CD8-positive, alpha-beta T cell (primary cell): ENCODE measurements at regions of chr16 and their contacts with region 1.

Region 1: DNA sequence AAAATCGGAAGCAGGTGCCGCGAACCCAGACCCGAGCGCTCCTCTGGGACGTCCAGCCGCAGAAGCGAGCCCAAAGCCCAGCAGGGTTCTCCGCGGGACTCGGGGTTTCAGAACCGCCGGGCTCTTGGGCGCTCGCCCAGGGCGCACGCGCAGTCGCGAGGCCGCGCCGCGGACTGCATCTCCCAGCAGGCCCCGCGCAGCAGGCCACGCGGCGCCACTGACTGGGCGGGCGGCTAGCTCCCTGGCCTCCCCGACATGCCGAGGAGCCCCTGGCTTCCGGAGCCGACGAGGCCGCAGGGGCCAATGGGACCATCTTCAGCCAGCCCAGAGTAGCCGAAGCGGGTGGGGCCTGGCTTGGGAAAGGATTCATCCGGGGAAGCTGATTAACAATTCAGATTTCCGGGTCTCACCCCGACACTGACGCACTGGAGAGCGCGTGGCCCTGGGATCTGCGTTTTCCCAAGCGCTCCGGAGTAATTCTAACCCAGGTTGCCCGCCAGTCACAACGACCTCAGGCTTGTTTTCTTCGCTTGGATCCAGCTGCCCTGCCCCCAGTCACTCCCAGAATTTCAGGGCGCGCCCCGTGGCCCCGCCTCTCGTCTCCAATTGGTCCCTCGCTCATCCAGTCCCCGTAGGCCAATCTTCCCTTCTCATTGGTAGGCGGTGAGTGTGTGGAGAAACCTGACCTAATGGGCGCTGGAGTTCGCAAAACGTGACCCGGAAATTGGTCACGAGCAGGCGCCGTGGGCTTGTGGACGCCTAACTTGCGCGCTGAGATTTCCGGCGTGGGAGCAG is at the start of gene ZNF263:
- DNase-seq: peak; percentile 82 to 98 (median 92)
- ATAC-seq: peak; percentile 88
- H3K4me3 ChIP-seq: peak within 1 kb of the TSS; percentile 84 to 92
- H3K4me3 Mint-ChIP-seq: peak within 1 kb of the TSS; percentile 89
- H3K27ac ChIP-seq: peak within 1 kb of the TSS; percentile 96 to 100
- H3K27ac Mint-ChIP-seq: peak within 1 kb of the TSS; percentile 96
- H3K4me1 ChIP-seq: peaks cover 28% of the 10 kb centered on the region
- H3K4me1 Mint-ChIP-seq: peaks cover 56% of the 10 kb centered on the region
- H3K27me3 ChIP-seq: no peaks in the 10 kb centered on the region
- H3K27me3 Mint-ChIP-seq: no peaks in the 10 kb centered on the region
- CTCF ChIP-seq: no peak
- total RNA-seq, gene ZNF263: 44.2 to 49.0 TPM

Region 2: DNA sequence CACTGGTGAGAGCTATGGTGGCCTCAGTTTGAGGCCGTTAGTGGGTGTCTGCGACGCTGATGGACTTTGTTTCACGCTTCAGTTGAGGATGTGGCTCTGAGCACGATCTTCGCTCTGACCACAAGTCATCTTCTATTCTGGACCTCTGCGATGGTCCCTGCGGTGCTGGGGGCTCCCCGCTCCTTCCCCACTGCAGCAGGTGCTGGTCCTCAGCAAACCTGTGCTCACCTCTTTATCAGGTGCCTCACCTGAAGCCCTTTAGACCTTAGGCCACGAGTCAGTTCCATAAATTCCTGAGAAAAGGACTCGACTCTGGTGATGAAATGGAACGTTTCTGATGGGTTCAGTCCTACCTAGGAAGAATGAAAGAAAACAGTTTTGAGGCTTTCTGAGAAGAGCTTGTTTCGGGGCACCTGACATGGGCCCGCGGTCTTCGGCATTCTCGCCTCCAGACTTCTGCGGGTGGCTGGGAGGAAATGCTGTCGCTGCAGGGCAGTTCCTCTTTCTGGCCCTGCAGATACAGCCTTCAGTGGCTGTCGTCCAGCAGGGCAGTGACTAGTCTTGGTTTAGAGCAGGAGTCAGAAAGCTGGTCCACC is 595.9 kb before region 1 on chr16:
- CTCF ChIA-PET with region 1: no interaction called
- POLR2A ChIA-PET with region 1: no interaction called
- intact Hi-C with region 1: no loop called
- DNase-seq: peak in 6 of 9 experiments; percentile 20 to 54 (median 38)
- ATAC-seq: no peak
- H3K4me3 ChIP-seq: peak overlapping the region in 1 of 2 experiments; percentile 10
- H3K4me3 Mint-ChIP-seq: peak overlapping the region; percentile 60
- H3K27ac ChIP-seq: peak overlapping the region; percentile 9 to 69
- H3K27ac Mint-ChIP-seq: peak overlapping the region; percentile 67
- H3K4me1 ChIP-seq: peaks cover 13% of the 10 kb centered on the region
- H3K4me1 Mint-ChIP-seq: peaks cover 30% of the 10 kb centered on the region
- H3K27me3 ChIP-seq: no peaks in the 10 kb centered on the region
- H3K27me3 Mint-ChIP-seq: no peaks in the 10 kb centered on the region
- CTCF ChIP-seq: no peak

Region 3: GRCh38 chr16:3023669-3024478 is 259.1 kb before region 1 on chr16 and contains the starts of genes HCFC1R1 and THOC6:
- CTCF ChIA-PET with region 1: no interaction called
- POLR2A ChIA-PET with region 1: no interaction called
- intact Hi-C with region 1: loop called in 1 of 2 experiments (anchors 2 kb)
- DNase-seq: peak; percentile 88 to 98 (median 96)
- ATAC-seq: peak; percentile 73
- H3K4me3 ChIP-seq: peak within 1 kb of the TSS; percentile 88 to 90
- H3K4me3 Mint-ChIP-seq: peak within 1 kb of the TSS; percentile 95
- H3K27ac ChIP-seq: peak within 1 kb of the TSS; percentile 70 to 96
- H3K27ac Mint-ChIP-seq: peak within 1 kb of the TSS; percentile 95
- H3K4me1 ChIP-seq: peaks cover 65% of the 10 kb centered on the region
- H3K4me1 Mint-ChIP-seq: peaks cover 49% of the 10 kb centered on the region
- H3K27me3 ChIP-seq: peaks cover 0 to 3% of the 10 kb centered on the region in 2 experiments
- H3K27me3 Mint-ChIP-seq: peaks cover 3% of the 10 kb centered on the region
- CTCF ChIP-seq: no peak
- total RNA-seq, gene HCFC1R1: 6.4 to 7.1 TPM
- total RNA-seq, gene THOC6: 13.1 to 14.0 TPM

Region 4: DNA sequence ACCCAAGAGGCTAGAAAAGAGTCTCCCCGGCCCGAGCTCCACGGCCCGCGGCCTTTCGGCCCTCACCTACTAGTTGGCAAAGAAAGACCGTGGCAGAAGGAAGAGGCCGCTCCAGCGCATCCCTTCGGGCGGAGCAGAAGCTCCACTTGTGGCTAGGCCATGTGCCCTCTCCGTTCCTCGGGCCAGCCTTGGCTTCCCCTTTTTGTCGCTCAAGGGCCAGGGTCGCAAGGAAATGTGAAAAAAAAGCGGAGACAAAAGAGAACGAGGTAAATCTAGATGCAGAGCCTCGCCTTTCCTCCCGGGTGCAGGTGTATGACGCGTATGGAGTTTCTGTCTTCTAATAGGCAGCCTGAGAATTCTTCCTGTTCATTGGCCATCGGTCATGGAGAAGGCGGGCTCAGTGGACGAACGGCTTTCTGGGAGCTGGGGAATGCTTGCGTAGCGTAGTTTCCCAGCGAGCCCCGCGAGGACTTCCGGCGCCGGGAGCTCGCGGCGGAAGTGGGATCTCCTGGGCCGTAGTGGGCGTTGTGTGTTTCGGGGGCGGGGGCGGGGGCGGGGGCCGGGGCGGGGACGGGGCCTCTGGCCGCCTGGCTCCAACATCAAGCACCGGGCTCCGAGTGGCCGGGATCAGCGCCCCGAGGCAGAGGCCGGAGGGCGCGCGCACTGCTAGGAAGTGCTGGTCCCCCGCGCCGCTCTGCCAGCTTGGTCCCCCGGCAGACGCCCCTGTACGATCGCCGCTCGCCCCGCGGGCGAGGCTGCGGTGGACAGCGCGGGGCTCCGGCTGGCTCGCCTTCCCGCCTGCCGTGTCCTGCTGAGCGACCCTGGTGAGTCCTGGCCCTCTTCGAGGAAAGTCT is 148.1 kb before region 1 on chr16 and contains the start of gene ZNF213:
- CTCF ChIA-PET with region 1: interaction called, 4 read pairs
- POLR2A ChIA-PET with region 1: interaction called, 6 read pairs
- intact Hi-C with region 1: loop called in 1 of 2 experiments (anchors 2 kb)
- DNase-seq: peak; percentile 84 to 99 (median 92)
- ATAC-seq: peak; percentile 99
- H3K4me3 ChIP-seq: peak within 1 kb of the TSS; percentile 89 to 93
- H3K4me3 Mint-ChIP-seq: peak within 1 kb of the TSS; percentile 95
- H3K27ac ChIP-seq: peak within 1 kb of the TSS; percentile 94 to 95
- H3K27ac Mint-ChIP-seq: peak within 1 kb of the TSS; percentile 99
- H3K4me1 ChIP-seq: peaks cover 15% of the 10 kb centered on the region
- H3K4me1 Mint-ChIP-seq: peaks cover 29% of the 10 kb centered on the region
- H3K27me3 ChIP-seq: no peaks in the 10 kb centered on the region
- H3K27me3 Mint-ChIP-seq: no peaks in the 10 kb centered on the region
- CTCF ChIP-seq: peak; percentile 5
- total RNA-seq, gene ZNF213: 1.8 to 2.2 TPM

Region 5: GRCh38 chr16:3198334-3199072 is 84.4 kb before region 1 on chr16:
- CTCF ChIA-PET with region 1: no interaction called
- POLR2A ChIA-PET with region 1: no interaction called
- intact Hi-C with region 1: no loop called
- DNase-seq: no peak
- ATAC-seq: no peak
- H3K4me3 ChIP-seq: no peak overlapping the region
- H3K4me3 Mint-ChIP-seq: no peak overlapping the region
- H3K27ac ChIP-seq: no peak overlapping the region
- H3K27ac Mint-ChIP-seq: no peak overlapping the region
- H3K4me1 ChIP-seq: no peaks in the 10 kb centered on the region
- H3K4me1 Mint-ChIP-seq: peaks cover 4% of the 10 kb centered on the region
- H3K27me3 ChIP-seq: peaks cover 17 to 23% of the 10 kb centered on the region in 2 experiments
- H3K27me3 Mint-ChIP-seq: peaks cover 24% of the 10 kb centered on the region
- CTCF ChIP-seq: no peak

Region 6: DNA sequence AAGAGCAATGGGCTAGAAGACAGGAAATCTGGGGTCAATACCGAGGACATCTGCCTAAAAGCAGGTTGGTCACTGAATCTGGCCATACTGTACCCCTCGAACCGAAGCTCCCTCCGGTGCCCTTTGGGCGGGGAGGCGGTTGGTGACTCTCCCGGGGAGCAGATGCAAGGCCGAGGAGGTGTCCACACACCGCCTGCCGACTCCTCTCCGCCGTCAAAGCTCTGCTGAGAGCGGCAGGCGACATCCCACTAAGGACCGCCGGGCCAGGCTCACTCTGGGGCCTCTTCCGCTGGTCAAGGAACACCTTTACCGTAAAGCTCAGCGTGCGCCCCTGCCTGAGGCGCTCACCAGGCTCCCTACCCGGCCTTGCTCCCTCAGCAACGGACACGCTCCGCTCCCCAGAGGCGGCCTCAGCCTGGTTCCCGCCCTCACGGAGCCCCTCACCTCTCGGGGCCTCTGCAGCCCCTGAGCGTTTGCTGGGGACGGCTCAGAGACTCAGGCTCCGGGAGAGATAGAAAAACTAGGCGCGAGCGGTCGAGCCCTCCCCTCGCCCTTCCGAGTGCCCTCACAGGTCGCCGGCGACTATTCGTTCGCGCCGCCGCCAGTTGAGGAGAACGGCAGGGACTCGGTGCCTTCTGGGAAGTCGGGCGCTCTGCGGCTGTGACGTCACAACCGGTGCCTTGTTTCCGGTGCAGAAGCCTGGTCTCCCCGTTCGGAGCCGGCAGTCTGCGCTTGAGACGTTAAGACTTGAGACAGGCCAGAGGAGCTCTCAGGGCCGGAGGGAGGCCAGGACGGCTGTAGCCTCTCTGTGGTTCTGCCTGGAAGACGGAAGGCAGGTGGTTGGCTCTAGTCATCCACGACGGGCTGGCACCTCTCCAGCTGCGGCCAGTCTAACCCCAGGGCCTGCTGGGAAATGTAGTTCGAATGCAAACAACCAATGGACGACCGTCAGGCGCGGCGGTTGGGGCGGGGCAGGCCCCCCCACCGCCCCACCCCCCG is 48.1 kb before region 1 on chr16 and contains the start of gene ZNF200:
- CTCF ChIA-PET with region 1: no interaction called
- POLR2A ChIA-PET with region 1: interaction called, 13 read pairs
- intact Hi-C with region 1: loop called (anchors 1 kb)
- DNase-seq: peak; percentile 85 to 97 (median 95)
- ATAC-seq: peak; percentile 85
- H3K4me3 ChIP-seq: peak within 1 kb of the TSS; percentile 82 to 99
- H3K4me3 Mint-ChIP-seq: peak within 1 kb of the TSS; percentile 96
- H3K27ac ChIP-seq: peak within 1 kb of the TSS; percentile 94 to 96
- H3K27ac Mint-ChIP-seq: peak within 1 kb of the TSS; percentile 98
- H3K4me1 ChIP-seq: peaks cover 21% of the 10 kb centered on the region
- H3K4me1 Mint-ChIP-seq: peaks cover 40% of the 10 kb centered on the region
- H3K27me3 ChIP-seq: no peaks in the 10 kb centered on the region
- H3K27me3 Mint-ChIP-seq: no peaks in the 10 kb centered on the region
- CTCF ChIP-seq: no peak
- total RNA-seq, gene ZNF200: 12.5 to 14.1 TPM

Region 7: DNA sequence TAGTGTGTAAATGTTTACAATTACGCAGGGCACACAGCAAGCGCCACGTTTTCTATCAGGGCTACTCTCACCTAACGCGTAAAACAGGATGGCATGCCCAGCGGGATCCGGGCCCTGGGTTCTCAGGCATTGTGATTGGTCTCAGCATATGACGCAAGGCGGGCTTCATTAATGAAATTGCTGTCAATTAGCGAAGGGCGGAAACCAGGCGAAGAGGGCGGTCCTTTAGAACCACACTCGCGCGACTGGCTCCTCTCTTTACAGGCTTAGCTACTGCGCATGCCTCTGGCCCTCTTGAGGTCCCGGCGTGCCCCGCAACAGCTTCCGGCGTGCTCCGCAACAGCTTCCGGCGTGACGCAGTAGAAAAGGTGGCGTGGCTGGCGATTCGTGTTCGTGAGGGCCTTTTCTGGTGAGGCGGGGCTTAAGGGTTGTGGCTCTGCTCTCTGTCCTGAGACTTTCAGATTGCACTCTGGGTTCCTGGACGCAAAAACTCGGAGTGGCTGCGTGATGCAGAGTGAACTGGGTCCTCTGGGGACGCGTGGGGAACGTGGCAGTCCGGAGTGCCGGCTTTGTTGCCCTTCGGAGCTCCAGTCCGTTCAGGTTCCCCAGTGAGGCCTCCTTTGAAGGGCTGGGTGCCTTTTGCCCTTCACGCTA is 82.0 kb after region 1 on chr16:
- CTCF ChIA-PET with region 1: no interaction called
- POLR2A ChIA-PET with region 1: interaction called, 4 read pairs
- intact Hi-C with region 1: loop called (anchors 2 to 5 kb)
- DNase-seq: peak; percentile 67 to 95 (median 82)
- ATAC-seq: peak; percentile 91
- H3K4me3 ChIP-seq: peak overlapping the region; percentile 46 to 62
- H3K4me3 Mint-ChIP-seq: peak overlapping the region; percentile 81
- H3K27ac ChIP-seq: peak overlapping the region; percentile 72 to 91
- H3K27ac Mint-ChIP-seq: peak overlapping the region; percentile 91
- H3K4me1 ChIP-seq: peaks cover 9% of the 10 kb centered on the region
- H3K4me1 Mint-ChIP-seq: peaks cover 11% of the 10 kb centered on the region
- H3K27me3 ChIP-seq: peaks cover 0 to 10% of the 10 kb centered on the region in 2 experiments
- H3K27me3 Mint-ChIP-seq: peaks cover 24% of the 10 kb centered on the region
- CTCF ChIP-seq: no peak

Region 8: DNA sequence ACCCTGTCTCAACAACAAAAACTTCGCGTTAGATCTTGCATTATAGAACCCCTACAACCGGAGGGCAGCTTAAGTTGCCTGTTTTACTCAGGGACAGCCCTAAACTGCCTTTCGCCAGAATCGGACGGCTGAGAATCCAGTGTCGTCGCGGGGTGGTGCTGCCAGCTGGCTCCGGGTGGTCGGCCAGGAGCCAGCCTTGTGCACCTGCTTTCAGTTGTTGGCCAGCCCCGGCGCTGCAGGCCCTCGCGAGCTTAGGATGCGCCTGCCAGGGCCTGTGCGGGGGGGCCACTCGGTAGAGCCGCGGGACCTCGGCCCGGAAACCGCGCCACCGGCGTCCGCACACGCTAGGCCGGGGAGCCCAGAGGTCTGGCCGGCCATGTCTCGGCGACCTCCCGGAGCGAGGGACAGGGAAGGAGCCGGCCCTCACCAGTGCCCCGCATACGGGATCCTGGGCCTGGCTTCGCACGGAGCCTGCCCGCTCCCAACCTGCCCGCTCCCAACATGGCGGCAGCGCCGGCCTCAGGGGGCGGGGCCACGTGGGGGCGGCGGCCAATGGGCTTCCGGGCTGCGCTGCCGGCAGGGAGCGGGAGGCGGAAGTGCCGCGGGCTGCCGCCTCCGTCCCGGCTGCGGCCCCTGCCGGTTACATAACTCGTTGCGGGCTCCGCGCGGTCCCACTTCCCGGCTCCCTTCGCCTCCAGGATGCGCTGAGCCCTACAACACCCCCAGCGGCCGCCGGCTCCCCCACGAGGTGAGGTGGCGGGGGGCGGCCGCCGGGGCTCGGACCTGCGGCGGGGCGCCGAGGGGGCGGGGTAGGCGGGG is 174.7 kb after region 1 on chr16:
- CTCF ChIA-PET with region 1: interaction called, 3 read pairs
- POLR2A ChIA-PET with region 1: interaction called, 5 read pairs
- intact Hi-C with region 1: loop called (anchors 1 kb)
- DNase-seq: peak; percentile 78 to 96 (median 90)
- ATAC-seq: peak; percentile 84
- H3K4me3 ChIP-seq: peak overlapping the region; percentile 71 to 72
- H3K4me3 Mint-ChIP-seq: peak overlapping the region; percentile 85
- H3K27ac ChIP-seq: peak overlapping the region; percentile 76 to 89
- H3K27ac Mint-ChIP-seq: peak overlapping the region; percentile 93
- H3K4me1 ChIP-seq: peaks cover 42% of the 10 kb centered on the region
- H3K4me1 Mint-ChIP-seq: peaks cover 52% of the 10 kb centered on the region
- H3K27me3 ChIP-seq: no peaks in the 10 kb centered on the region
- H3K27me3 Mint-ChIP-seq: no peaks in the 10 kb centered on the region
- CTCF ChIP-seq: peak; percentile 49